MCF 10A (cell line): ENCODE measurements at regions of chr11 and their contacts with region 1.

Region 1: GRCh38 chr11:132941024-132941646 is 591.2 kb downstream of the OPCML start:
- DNase-seq: peak; percentile 20
- H3K4me3 Mint-ChIP-seq: no peak overlapping the region
- H3K27ac Mint-ChIP-seq: no peak overlapping the region
- H3K4me1 Mint-ChIP-seq: no peaks in the 10 kb centered on the region
- H3K27me3 Mint-ChIP-seq: no peaks in the 10 kb centered on the region
- CTCF ChIP-seq: peak; percentile 53

Region 2: GRCh38 chr11:132278801-132279574 is 662.1 kb before region 1 on chr11:
- CTCF ChIA-PET with region 1: no interaction called
- POLR2A ChIA-PET with region 1: no interaction called
- intact Hi-C with region 1: no loop called
- DNase-seq: no peak
- H3K4me3 Mint-ChIP-seq: no peak overlapping the region
- H3K27ac Mint-ChIP-seq: no peak overlapping the region
- H3K4me1 Mint-ChIP-seq: no peaks in the 10 kb centered on the region
- H3K27me3 Mint-ChIP-seq: no peaks in the 10 kb centered on the region
- CTCF ChIP-seq: no peak

Region 3: GRCh38 chr11:132957881-132958280 is 16.7 kb after region 1 on chr11:
- CTCF ChIA-PET with region 1: interaction called, 29 read pairs
- POLR2A ChIA-PET with region 1: no interaction called
- intact Hi-C with region 1: no loop called
- DNase-seq: no peak
- H3K4me3 Mint-ChIP-seq: no peak overlapping the region
- H3K27ac Mint-ChIP-seq: no peak overlapping the region
- H3K4me1 Mint-ChIP-seq: no peaks in the 10 kb centered on the region
- H3K27me3 Mint-ChIP-seq: no peaks in the 10 kb centered on the region
- CTCF ChIP-seq: no peak